H1 (cell line): ENCODE measurements at regions of chr4 and their contacts with region 1.

Region 1: GRCh38 chr4:74133786-74134499 is 24.0 kb upstream of the MTHFD2L start:
- DNase-seq: peak; percentile 38 to 83
- H3K4me3 ChIP-seq: no peak overlapping the region
- H3K27ac ChIP-seq: no peak overlapping the region
- H3K4me1 ChIP-seq: peaks cover 0 to 6% (median 1%) of the 10 kb centered on the region in 4 experiments; a peak in 3 of 7 replicates
- H3K27me3 ChIP-seq: no peaks in the 10 kb centered on the region
- CTCF ChIP-seq: peak; percentile 26 to 85 (median 79)
- EP300 ChIP-seq: no peak
- POLR2A ChIP-seq: no peak
- RAD21 ChIP-seq: peak; percentile 95 to 97

Region 2: DNA sequence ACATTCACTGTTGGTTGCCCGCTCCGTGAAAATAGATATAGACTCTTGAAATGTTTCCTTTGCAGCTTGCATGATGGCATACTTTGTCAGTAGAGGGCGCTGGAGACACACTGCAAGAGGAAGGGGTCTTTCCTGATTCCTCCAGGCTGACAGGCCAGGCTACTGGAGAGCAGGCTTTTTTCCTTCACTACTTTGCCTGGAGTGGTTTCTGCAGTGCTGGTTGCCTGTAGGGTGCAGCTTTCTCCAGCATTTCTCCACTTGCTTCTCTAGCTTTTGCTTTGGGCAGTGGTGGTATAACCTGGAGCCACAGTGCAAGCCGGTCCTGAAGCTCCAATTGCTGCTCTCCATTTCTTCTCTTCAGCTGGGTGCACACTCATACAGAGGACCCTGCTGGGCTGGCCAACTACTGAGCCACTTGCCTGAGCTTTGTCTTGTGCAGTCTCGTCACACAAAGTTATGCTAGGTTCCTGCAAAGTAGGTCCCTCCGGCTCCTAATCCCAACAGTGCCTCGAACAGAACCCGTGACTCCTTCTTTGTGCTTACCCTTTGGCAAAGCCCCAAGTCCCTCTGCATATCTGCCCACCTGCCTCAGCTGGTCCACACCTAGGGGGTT is 560.0 kb before region 1 on chr4:
- CTCF ChIA-PET with region 1: interaction called, 11 read pairs
- POLR2A ChIA-PET with region 1: no interaction called
- DNase-seq: peak; percentile 70 to 75
- H3K4me3 ChIP-seq: no peak overlapping the region
- H3K27ac ChIP-seq: no peak overlapping the region
- H3K4me1 ChIP-seq: no peaks in the 10 kb centered on the region; a peak in 1 of 7 replicates
- H3K27me3 ChIP-seq: no peaks in the 10 kb centered on the region
- CTCF ChIP-seq: peak; percentile 62 to 94 (median 94)
- EP300 ChIP-seq: no peak; a peak in 1 of 3 replicates
- POLR2A ChIP-seq: no peak
- RAD21 ChIP-seq: peak; percentile 97 to 99

Region 3: DNA sequence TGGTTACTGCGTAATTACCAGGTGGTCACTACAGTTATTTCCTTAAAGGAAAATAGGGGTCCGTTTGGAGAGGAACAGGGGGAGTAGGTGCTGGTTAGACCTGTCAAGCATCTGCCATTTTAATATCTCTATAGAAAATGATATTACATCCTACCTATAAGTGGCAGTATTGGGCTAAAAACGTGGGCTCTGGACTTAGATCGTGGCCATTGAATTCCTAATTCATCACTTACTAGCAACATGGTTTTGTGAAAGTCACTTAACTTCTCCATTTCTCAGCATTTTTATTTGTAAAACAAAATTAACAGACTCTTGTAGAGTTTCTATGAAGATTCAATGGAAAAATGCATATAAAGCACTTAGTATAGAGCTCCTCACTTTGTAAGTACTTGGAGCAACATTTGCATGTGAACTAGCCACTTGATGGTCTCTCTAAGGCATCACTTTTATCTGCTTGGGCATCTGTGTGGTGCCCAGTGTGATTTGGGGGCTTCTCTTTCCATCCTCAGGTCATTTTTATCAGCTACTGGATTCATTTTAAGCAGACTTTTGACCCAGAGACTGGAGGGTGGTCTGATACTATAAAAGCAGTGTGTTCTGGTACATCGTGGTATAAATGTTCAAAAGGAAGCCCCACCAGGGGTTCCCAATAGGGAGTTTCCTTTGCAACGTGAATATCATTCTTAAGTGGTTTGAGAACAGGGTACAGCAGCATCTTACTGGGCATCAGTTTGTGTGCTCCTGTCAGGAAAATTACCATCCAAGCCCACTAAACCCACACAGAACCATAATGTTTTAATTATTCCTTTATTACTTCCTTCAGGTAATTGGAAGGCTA is 471.0 kb before region 1 on chr4:
- CTCF ChIA-PET with region 1: interaction called, 24 read pairs
- POLR2A ChIA-PET with region 1: no interaction called
- DNase-seq: no peak
- H3K4me3 ChIP-seq: no peak overlapping the region
- H3K27ac ChIP-seq: no peak overlapping the region
- H3K4me1 ChIP-seq: peaks cover 0 to 5% (median 1%) of the 10 kb centered on the region in 4 experiments; a peak in 2 of 7 replicates
- H3K27me3 ChIP-seq: no peaks in the 10 kb centered on the region
- CTCF ChIP-seq: peak in 2 of 3 experiments; percentile 3 to 22; a peak in 2 of 4 replicates
- EP300 ChIP-seq: no peak
- POLR2A ChIP-seq: no peak
- RAD21 ChIP-seq: peak; percentile 50 to 52

Region 4: GRCh38 chr4:73674451-73674919 is 459.5 kb before region 1 on chr4:
- CTCF ChIA-PET with region 1: interaction called, 19 read pairs
- POLR2A ChIA-PET with region 1: no interaction called
- DNase-seq: no peak
- H3K4me3 ChIP-seq: no peak overlapping the region
- H3K27ac ChIP-seq: no peak overlapping the region
- H3K4me1 ChIP-seq: no peaks in the 10 kb centered on the region
- H3K27me3 ChIP-seq: no peaks in the 10 kb centered on the region
- CTCF ChIP-seq: no peak
- EP300 ChIP-seq: no peak
- POLR2A ChIP-seq: no peak
- RAD21 ChIP-seq: no peak

Region 5: DNA sequence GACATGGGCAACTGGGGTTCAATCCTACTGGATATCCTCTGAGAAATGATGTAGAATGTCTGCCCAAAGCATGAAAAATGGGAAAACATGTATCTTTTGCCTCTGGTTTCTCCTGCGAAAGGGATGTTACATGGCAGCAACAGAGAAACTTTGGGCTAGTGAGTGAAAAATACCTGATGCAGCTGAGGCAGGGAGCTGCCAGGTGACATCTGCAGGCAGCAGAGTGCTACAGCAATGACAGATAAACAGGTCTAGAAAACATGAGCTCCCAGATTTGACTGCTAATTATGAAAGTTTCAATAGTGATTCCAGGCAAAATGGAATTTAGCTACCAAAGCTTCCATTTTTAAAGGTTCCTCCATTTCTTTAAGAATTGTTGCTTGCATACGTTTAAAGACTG is 269.6 kb before region 1 on chr4:
- CTCF ChIA-PET with region 1: interaction called, 19 read pairs
- POLR2A ChIA-PET with region 1: no interaction called
- DNase-seq: no peak
- H3K4me3 ChIP-seq: no peak overlapping the region
- H3K27ac ChIP-seq: no peak overlapping the region
- H3K4me1 ChIP-seq: peaks cover 0 to 4% (median 0%) of the 10 kb centered on the region in 4 experiments; a peak in 1 of 7 replicates
- H3K27me3 ChIP-seq: peaks cover 0 to 10% (median 6%) of the 10 kb centered on the region in 4 experiments; a peak in 6 of 7 replicates
- CTCF ChIP-seq: peak; percentile 67 to 81 (median 68)
- EP300 ChIP-seq: no peak
- POLR2A ChIP-seq: no peak
- RAD21 ChIP-seq: peak; percentile 67 to 79

Region 6: DNA sequence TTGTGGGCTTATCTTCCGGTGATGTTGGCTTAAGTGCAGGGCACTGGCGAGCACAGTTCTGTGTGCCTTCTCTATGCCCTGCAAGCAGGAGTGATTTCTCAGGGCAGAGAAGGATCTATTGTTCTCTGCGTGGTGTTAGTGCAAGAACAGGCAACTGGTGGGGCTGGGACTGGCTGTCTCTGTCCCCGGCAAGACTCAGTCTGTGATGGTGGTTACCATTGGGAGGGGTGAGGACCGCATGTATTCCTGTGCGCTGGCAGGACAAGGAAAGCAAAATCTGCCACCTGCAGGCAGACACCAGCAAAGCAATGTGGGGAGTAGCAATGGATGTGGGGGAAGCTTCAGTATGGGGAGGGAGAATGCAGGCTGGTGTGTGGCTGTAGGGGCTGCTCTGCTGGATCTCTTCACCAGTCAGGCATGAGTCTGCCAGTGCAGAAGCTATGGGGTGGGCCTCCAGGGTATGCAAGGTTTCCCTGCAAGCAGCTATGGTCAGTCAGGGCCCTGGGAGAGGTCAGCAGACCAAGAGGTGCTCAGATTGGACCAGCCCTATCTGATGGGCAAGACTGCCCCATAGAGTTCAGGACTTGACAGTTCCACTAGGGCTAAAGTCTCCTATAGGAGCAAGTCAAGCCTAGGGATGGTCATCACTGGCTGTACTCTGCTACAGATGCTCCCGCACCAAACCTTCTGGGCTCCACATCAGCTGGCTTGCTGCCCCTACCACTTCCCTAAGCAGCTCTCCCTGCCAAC is 168.9 kb before region 1 on chr4:
- CTCF ChIA-PET with region 1: interaction called, 10 read pairs
- POLR2A ChIA-PET with region 1: no interaction called
- DNase-seq: peak in 1 of 2 experiments; percentile 79
- H3K4me3 ChIP-seq: no peak overlapping the region
- H3K27ac ChIP-seq: no peak overlapping the region
- H3K4me1 ChIP-seq: 0 out of 7 replicates have a peak, but pooled peaks cover 0 to 1% (median 0%) of the 10 kb centered on the region in 4 experiments
- H3K27me3 ChIP-seq: no peaks in the 10 kb centered on the region; a peak in 1 of 7 replicates
- CTCF ChIP-seq: peak; percentile 70 to 92 (median 92)
- EP300 ChIP-seq: no peak
- POLR2A ChIP-seq: no peak
- RAD21 ChIP-seq: peak; percentile 78 to 86

Region 7: GRCh38 chr4:74146581-74147129 is 12.7 kb after region 1 on chr4:
- CTCF ChIA-PET with region 1: interaction called, 12 read pairs
- POLR2A ChIA-PET with region 1: no interaction called
- DNase-seq: no peak
- H3K4me3 ChIP-seq: no peak overlapping the region
- H3K27ac ChIP-seq: no peak overlapping the region
- H3K4me1 ChIP-seq: no peaks in the 10 kb centered on the region
- H3K27me3 ChIP-seq: no peaks in the 10 kb centered on the region
- CTCF ChIP-seq: no peak
- EP300 ChIP-seq: no peak
- POLR2A ChIP-seq: no peak
- RAD21 ChIP-seq: no peak